ENCODE measurements at regions of chr1 and their contacts with region 1.

Region 1: DNA sequence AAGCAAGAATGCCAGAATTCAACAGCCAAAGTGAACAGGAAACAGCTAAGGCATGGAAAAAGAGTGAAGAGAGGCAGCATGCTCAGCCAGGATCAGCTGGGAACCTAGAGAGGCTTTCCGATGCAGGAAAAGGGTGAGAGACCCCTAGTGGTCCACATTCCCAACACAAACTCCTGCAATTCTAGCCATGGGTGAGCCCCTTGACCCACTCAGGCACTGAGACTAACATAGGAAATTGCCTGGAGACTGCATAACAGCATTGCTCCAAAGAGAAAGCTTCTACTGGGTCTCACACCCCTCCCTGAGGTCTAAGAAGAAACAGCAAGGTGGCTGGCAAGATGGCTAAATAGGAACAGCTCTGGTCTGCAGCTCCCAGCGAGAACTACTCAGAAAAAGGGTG is 123.2 kb downstream of the LHX8 start:
- DNase-seq: peak; percentile 21 to 60
- H3K4me3 ChIP-seq: no peak overlapping the region
- H3K27ac ChIP-seq: no peak overlapping the region
- H3K4me1 ChIP-seq: no peaks in the 10 kb centered on the region
- H3K27me3 ChIP-seq: no peaks in the 10 kb centered on the region
- CTCF ChIP-seq: peak; percentile 28 to 68 (median 49)
- EP300 ChIP-seq: no peak
- POLR2A ChIP-seq: no peak
- RAD21 ChIP-seq: peak; percentile 38 to 52; a peak in 3 of 4 replicates

Region 2: GRCh38 chr1:75062111-75062510 is 195.3 kb before region 1 on chr1:
- CTCF ChIA-PET with region 1: no interaction called
- POLR2A ChIA-PET with region 1: no interaction called
- DNase-seq: no peak
- H3K4me3 ChIP-seq: no peak overlapping the region
- H3K27ac ChIP-seq: no peak overlapping the region
- H3K4me1 ChIP-seq: no peaks in the 10 kb centered on the region
- H3K27me3 ChIP-seq: no peaks in the 10 kb centered on the region
- CTCF ChIP-seq: no peak
- EP300 ChIP-seq: no peak
- POLR2A ChIP-seq: no peak
- RAD21 ChIP-seq: no peak

Region 3: DNA sequence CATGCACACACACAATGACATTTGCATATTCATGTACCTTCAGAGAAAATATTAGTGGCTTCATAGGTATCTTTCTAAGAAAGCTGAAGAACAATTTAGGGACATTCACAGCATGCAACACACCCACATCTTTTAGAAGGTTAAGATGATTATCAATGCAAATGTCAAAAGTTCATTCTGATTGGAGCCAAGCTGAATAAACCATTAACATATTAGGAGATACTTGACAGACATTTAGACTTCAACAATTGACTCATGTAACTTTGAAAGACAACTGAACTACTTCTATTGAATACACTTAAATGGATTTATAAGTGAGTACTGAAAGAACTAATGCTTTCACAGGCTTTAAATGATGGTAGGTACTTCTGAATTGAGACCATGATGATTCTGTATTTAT is 12.2 kb before region 1 on chr1:
- CTCF ChIA-PET with region 1: interaction called, 33 read pairs
- POLR2A ChIA-PET with region 1: no interaction called
- DNase-seq: no peak
- H3K4me3 ChIP-seq: no peak overlapping the region
- H3K27ac ChIP-seq: no peak overlapping the region
- H3K4me1 ChIP-seq: no peaks in the 10 kb centered on the region
- H3K27me3 ChIP-seq: no peaks in the 10 kb centered on the region
- CTCF ChIP-seq: no peak
- EP300 ChIP-seq: no peak
- POLR2A ChIP-seq: no peak
- RAD21 ChIP-seq: no peak

Region 4: DNA sequence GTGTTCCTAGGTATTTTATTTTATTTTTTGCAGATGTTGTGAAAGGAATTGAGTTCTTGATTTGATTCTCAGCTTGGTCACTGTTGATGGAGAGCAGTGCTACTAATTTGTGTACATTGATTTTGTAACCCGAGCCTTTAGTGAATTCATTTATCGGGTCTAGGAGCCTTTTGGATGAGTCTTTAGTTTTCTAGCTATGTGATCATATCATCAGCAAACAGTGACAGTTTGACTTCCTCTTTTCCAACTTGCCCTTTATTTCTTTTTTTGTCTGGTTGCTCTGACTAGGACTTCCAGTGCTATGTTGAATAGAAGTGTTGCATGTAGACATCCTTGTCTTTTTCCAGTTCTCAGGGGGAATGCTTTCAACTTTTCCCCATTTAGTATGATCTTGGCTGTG is 15.7 kb after region 1 on chr1:
- CTCF ChIA-PET with region 1: interaction called, 22 read pairs
- POLR2A ChIA-PET with region 1: no interaction called
- DNase-seq: no peak
- H3K4me3 ChIP-seq: no peak overlapping the region
- H3K27ac ChIP-seq: no peak overlapping the region
- H3K4me1 ChIP-seq: no peaks in the 10 kb centered on the region
- H3K27me3 ChIP-seq: no peaks in the 10 kb centered on the region
- CTCF ChIP-seq: no peak
- EP300 ChIP-seq: no peak
- POLR2A ChIP-seq: no peak
- RAD21 ChIP-seq: no peak